ENCODE measurements at regions of chr20 and their contacts with region 1.

Region 1: DNA sequence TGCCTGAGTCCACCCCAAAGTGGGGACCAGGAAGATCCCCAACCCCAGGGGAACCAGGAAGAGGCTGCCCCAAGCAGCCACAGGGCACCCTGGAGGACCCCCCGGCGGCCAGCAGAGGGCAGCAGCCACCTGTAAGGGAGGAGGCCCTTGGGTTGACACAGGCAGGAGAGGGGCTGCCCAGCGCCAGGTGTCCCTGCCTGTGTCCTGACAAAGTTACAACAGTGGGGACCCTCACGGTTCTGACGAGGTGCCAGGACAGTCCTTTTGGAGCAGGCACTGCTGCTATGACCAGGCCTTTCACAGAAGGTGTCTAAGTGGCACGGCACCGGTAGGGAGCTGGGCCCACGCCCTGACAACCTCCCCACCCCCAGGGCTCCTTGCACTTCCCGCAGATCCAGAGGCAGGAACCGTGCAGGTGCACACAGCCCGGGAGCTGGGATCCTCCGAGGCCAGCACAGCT is 176.7 kb downstream of the BMP7 start:
- DNase-seq: peak; percentile 69
- H3K4me3 Mint-ChIP-seq: no peak overlapping the region
- H3K27ac Mint-ChIP-seq: no peak overlapping the region
- H3K4me1 Mint-ChIP-seq: peaks cover 7% of the 10 kb centered on the region
- H3K27me3 Mint-ChIP-seq: peaks cover 16% of the 10 kb centered on the region
- CTCF ChIP-seq: peak; percentile 98

Region 2: GRCh38 chr20:57108732-57109573 is 19.2 kb after region 1 on chr20:
- CTCF ChIA-PET with region 1: interaction called, 14 read pairs
- POLR2A ChIA-PET with region 1: no interaction called
- intact Hi-C with region 1: no loop called
- DNase-seq: no peak
- H3K4me3 Mint-ChIP-seq: no peak overlapping the region
- H3K27ac Mint-ChIP-seq: no peak overlapping the region
- H3K4me1 Mint-ChIP-seq: no peaks in the 10 kb centered on the region
- H3K27me3 Mint-ChIP-seq: peaks cover 51% of the 10 kb centered on the region
- CTCF ChIP-seq: no peak

Region 3: GRCh38 chr20:57200882-57201773 is 111.4 kb after region 1 on chr20:
- CTCF ChIA-PET with region 1: interaction called, 5 read pairs
- POLR2A ChIA-PET with region 1: no interaction called
- intact Hi-C with region 1: loop called (anchors 1 kb)
- DNase-seq: peak; percentile 30
- H3K4me3 Mint-ChIP-seq: no peak overlapping the region
- H3K27ac Mint-ChIP-seq: no peak overlapping the region
- H3K4me1 Mint-ChIP-seq: peaks cover 16% of the 10 kb centered on the region
- H3K27me3 Mint-ChIP-seq: no peaks in the 10 kb centered on the region
- CTCF ChIP-seq: no peak

Region 4: DNA sequence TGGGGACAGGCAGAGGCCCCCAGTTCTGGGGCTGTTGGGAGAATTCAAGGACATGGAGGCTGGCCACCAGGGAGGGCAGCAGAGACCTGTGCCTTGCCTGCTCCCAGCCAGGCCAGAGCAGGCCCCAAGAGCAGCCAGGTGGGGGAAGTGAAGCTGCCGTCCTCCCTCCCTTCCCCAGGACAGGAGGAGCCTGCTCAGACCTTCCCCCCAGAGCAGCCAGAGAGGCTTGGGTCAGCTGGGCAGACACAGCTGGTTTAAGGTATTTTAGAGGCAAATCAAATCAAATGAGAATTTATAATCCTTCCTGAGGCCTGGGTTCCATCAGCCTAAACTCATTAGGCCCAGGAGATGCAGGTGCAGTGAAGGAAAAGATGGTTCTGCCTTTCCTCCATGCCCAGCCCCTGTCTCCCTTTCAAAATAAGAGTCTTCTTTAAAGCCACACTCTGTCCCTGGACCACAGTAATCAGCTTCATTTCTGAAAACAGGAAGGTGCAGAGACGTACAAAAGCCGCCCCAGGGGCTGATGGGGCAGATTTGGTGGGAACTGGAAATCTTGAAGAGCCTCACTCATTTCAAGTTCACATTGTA is 155.0 kb after region 1 on chr20:
- CTCF ChIA-PET with region 1: interaction called, 15 read pairs
- POLR2A ChIA-PET with region 1: no interaction called
- intact Hi-C with region 1: no loop called
- DNase-seq: no peak
- H3K4me3 Mint-ChIP-seq: no peak overlapping the region
- H3K27ac Mint-ChIP-seq: no peak overlapping the region
- H3K4me1 Mint-ChIP-seq: peaks cover 9% of the 10 kb centered on the region
- H3K27me3 Mint-ChIP-seq: peaks cover 8% of the 10 kb centered on the region
- CTCF ChIP-seq: no peak

Region 5: GRCh38 chr20:57272883-57273535 is 183.3 kb after region 1 on chr20:
- CTCF ChIA-PET with region 1: interaction called, 3 read pairs
- POLR2A ChIA-PET with region 1: no interaction called
- intact Hi-C with region 1: loop called (anchors 10 kb)
- DNase-seq: no peak
- H3K4me3 Mint-ChIP-seq: no peak overlapping the region
- H3K27ac Mint-ChIP-seq: no peak overlapping the region
- H3K4me1 Mint-ChIP-seq: peaks cover 7% of the 10 kb centered on the region
- H3K27me3 Mint-ChIP-seq: peaks cover 63% of the 10 kb centered on the region
- CTCF ChIP-seq: no peak

Region 6: GRCh38 chr20:57351042-57351783 is 261.5 kb after region 1 on chr20 and contains the start of gene RAE1:
- CTCF ChIA-PET with region 1: interaction called, 485 read pairs
- POLR2A ChIA-PET with region 1: interaction called, 8 read pairs
- intact Hi-C with region 1: loop called (anchors 1 kb)
- DNase-seq: peak; percentile 87
- H3K4me3 Mint-ChIP-seq: peak within 1 kb of the TSS; percentile 80
- H3K27ac Mint-ChIP-seq: peak within 1 kb of the TSS; percentile 81
- H3K4me1 Mint-ChIP-seq: peaks cover 15% of the 10 kb centered on the region
- H3K27me3 Mint-ChIP-seq: no peaks in the 10 kb centered on the region
- CTCF ChIP-seq: no peak
- total RNA-seq, gene RAE1: 46.7 and 60.3 TPM in 2 replicates

Region 7: GRCh38 chr20:57498425-57499400 is 409.0 kb after region 1 on chr20:
- CTCF ChIA-PET with region 1: interaction called, 3 read pairs
- POLR2A ChIA-PET with region 1: no interaction called
- intact Hi-C with region 1: loop called (anchors 10 kb)
- DNase-seq: peak; percentile 37
- H3K4me3 Mint-ChIP-seq: no peak overlapping the region
- H3K27ac Mint-ChIP-seq: no peak overlapping the region
- H3K4me1 Mint-ChIP-seq: no peaks in the 10 kb centered on the region
- H3K27me3 Mint-ChIP-seq: peaks cover 66% of the 10 kb centered on the region
- CTCF ChIP-seq: peak; percentile 20